HEK293 (cell line): ENCODE measurements at regions of chr2 and their contacts with region 1.

Region 1: DNA sequence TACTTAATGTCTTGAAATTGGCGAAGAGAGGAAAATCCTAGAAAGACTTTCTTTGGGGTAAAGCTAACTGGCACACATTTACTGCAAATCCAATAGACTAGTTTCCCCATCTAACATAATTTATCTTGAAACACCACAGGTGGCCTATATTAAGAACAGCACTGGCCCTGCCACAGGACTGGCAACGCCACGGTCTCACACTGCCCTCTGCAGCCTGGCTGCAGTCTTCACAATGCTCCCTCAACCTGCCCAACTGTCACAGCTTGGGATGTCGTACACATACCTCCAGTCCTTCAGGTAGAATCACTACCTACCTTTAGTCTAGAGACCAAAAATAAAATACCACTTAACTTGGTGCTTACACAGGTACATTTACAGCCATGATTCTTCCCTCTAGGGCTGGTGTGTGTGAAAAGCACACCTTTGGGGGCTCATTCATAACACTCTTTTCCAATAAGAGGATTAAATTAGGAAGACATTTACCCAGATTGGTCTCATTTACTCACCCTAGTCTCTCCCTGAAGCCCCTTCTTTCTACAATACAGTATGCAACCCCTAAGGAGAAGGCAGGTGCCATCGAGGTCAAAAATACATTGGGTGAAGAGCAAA is 222.2 kb downstream of the C1D start:
- H3K4me3 ChIP-seq: no peak overlapping the region
- H3K27ac ChIP-seq: no peak overlapping the region
- H3K4me1 ChIP-seq: peaks cover 2% of the 10 kb centered on the region
- CTCF ChIP-seq: peak; percentile 91

Region 2: GRCh38 chr2:67571785-67572718 is 268.5 kb before region 1 on chr2:
- CTCF ChIA-PET with region 1: no interaction called
- POLR2A ChIA-PET with region 1: no interaction called
- H3K4me3 ChIP-seq: no peak overlapping the region
- H3K27ac ChIP-seq: no peak overlapping the region
- H3K4me1 ChIP-seq: no peaks in the 10 kb centered on the region; the same call in 1 of the 2 replicates
- CTCF ChIP-seq: no peak

Region 3: DNA sequence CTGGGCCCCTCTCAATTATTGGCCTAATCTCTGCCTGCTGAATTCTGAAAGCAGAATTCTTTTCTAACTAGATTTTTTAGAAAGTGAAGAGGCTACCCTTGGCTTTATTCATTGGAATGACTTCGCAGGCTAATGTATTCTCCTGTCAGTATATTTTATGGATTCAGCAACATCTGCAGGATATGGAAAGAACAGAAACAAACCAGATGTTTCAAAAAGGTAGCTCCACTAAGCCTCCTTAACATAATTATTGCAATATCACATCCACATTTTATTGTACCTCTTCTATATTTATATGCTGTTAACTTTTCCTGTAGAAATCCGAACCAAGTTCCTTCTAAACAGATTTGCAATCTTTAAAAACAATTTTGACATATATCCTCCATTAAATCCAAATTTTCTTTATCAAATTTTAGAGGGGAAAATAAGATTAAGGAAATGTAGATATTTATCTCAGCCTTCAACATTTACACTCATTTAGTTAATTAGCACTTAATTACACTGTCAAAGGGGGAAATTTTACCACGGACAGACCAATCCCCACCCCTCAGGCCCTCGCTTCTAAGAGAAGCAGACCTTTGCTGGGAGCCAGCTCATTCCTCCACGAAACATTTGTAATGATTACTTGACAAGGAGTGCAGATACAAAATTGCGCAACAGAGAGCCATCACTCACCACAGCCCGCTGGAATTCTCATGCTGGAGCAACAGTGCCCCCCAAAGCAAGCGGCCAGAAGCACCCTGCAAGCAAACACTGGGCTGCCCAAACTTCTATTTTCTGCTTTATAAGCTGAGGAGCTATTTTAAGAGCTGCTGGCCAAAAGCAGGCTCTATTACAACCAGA is 190.1 kb before region 1 on chr2:
- CTCF ChIA-PET with region 1: interaction called, 16 read pairs
- POLR2A ChIA-PET with region 1: no interaction called
- H3K4me3 ChIP-seq: no peak overlapping the region
- H3K27ac ChIP-seq: no peak overlapping the region
- H3K4me1 ChIP-seq: peaks cover 12% of the 10 kb centered on the region; the same call in 1 of the 2 replicates
- CTCF ChIP-seq: peak; percentile 72; the same call in 1 of the 2 replicates

Region 4: GRCh38 chr2:67674668-67675067 is 165.9 kb before region 1 on chr2:
- CTCF ChIA-PET with region 1: no interaction called
- POLR2A ChIA-PET with region 1: no interaction called
- H3K4me3 ChIP-seq: no peak overlapping the region
- H3K27ac ChIP-seq: no peak overlapping the region
- H3K4me1 ChIP-seq: no peaks in the 10 kb centered on the region
- CTCF ChIP-seq: no peak

Region 5: GRCh38 chr2:67733517-67733916 is 107.0 kb before region 1 on chr2:
- CTCF ChIA-PET with region 1: interaction called, 27 read pairs
- POLR2A ChIA-PET with region 1: no interaction called
- H3K4me3 ChIP-seq: no peak overlapping the region
- H3K27ac ChIP-seq: no peak overlapping the region
- H3K4me1 ChIP-seq: no peaks in the 10 kb centered on the region
- CTCF ChIP-seq: no peak

Region 6: GRCh38 chr2:67930156-67930555 is 89.6 kb after region 1 on chr2:
- CTCF ChIA-PET with region 1: no interaction called
- POLR2A ChIA-PET with region 1: no interaction called
- H3K4me3 ChIP-seq: no peak overlapping the region
- H3K27ac ChIP-seq: no peak overlapping the region
- H3K4me1 ChIP-seq: no peaks in the 10 kb centered on the region
- CTCF ChIP-seq: no peak

Region 7: DNA sequence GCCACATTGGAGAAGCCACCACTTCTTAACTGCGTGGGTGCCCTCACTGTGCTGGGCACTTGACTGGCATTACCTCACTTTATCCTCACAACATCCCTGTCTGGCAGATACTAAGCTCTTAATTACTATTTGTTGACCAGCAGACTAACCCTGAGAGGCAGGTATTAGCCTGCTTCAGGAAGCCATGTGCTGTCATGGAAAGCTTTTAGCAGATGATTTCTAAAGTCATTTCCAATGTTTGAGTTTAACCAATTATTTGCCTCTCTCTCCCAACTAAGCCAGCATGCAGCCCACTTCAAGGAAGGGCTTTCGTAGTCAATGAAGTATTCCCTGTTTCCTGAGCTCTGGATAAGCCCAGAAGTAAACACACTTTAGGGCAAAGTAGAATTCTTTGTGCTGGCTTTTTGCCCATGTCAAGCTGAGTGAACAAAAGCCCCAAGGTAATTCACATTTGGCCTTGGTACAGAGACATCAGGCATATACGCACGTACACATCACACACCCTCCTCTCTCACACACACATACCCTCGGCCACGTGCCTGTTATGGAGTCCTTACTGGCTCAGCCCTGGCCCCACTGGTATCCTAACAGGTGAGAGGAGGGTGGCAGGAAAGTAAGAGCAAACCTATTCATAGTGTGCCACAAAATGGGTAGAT is 113.7 kb after region 1 on chr2:
- CTCF ChIA-PET with region 1: no interaction called
- POLR2A ChIA-PET with region 1: no interaction called
- H3K4me3 ChIP-seq: no peak overlapping the region
- H3K27ac ChIP-seq: no peak overlapping the region; the same call in 1 of the 2 replicates
- H3K4me1 ChIP-seq: peaks cover 2% of the 10 kb centered on the region; the same call in 1 of the 2 replicates
- CTCF ChIP-seq: no peak